Vagina (tissue), 2 donors: ENCODE measurements at regions of chr4 and their contacts with region 1.

Region 1: DNA sequence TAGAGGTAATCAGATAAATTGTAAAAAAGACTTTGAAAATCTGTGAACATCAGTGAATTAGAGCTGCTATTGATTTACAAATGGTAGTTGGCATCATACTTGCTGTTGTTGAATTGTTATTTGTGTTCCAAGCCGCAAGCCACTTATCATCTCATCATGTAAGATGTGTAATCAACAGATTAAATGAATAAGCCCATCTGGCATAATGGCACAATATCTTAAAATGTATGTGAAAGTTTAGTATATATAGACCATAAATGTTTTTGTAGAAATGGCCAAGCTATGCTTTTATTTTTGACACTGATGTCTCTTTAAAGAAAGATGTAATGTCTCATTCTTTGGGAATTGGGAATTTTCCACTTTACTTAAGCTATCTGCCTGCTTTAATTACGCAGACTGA is 682.6 kb upstream of the GNPDA2 start:
- DNase-seq: no peak
- H3K4me3 ChIP-seq: no peak overlapping the region
- H3K27ac ChIP-seq: no peak overlapping the region
- H3K4me1 ChIP-seq: no peaks in the 10 kb centered on the region
- H3K27me3 ChIP-seq: no peaks in the 10 kb centered on the region
- CTCF ChIP-seq: no peak
- POLR2A ChIP-seq: no peak

Region 2: DNA sequence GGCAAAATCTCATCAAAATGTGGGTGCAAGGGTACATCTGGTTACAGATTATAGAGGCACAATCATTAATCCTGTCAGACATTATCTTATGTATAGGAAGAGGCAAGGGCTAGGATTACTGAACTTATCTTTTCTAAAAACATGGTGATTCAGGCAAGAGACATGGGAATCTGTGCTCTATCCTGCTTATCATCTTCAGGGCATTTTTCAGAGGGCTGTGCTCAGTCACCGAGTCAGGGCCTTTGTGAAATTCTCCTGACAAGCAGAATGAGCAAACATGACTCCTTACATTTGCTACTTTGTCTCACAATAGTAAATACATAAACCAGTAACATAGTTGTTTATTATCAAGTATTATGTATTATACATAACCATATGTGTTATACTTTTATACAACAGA is 876.1 kb before region 1 on chr4:
- intact Hi-C with region 1: loop called (anchors 5 kb)
- DNase-seq: no peak
- H3K4me3 ChIP-seq: no peak overlapping the region
- H3K27ac ChIP-seq: no peak overlapping the region
- H3K4me1 ChIP-seq: no peaks in the 10 kb centered on the region
- H3K27me3 ChIP-seq: no peaks in the 10 kb centered on the region
- CTCF ChIP-seq: no peak
- POLR2A ChIP-seq: no peak

Region 3: GRCh38 chr4:45475548-45475947 is 66.6 kb after region 1 on chr4:
- intact Hi-C with region 1: no loop called
- DNase-seq: no peak
- H3K4me3 ChIP-seq: no peak overlapping the region
- H3K27ac ChIP-seq: no peak overlapping the region
- H3K4me1 ChIP-seq: no peaks in the 10 kb centered on the region
- H3K27me3 ChIP-seq: no peaks in the 10 kb centered on the region
- CTCF ChIP-seq: no peak
- POLR2A ChIP-seq: no peak

Region 4: DNA sequence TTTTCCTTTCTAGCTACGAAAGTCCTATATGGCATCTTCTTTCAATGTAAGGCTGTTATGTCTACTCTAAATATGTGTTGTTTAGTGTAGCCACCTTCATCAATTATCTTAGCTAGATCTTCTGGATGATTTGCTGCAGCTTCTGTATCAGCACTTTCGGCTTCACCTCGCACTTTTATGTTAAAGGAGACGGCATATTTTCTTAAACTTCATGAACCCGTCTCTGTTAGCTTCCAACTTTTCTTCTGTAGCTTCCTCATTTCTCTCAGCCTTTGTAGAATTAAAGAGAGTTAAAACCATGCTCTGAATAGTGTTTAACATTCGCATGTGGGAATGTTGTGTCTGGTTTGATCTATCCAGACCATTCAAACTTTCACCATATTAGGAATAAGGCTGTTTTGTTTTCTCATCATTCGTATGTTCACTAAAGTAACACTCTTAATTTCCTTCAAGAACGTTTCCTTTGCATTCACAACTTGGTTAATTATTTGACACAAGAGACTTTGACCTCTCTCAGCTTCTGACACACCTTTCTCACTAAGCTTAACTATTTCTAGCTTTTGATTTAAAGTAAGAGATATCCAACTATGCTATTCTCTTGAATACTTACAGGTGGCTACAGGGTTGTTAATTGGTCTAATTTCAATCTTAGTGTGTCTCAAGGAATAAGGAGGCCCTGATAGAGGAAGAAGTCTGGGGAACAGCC is 238.0 kb after region 1 on chr4:
- intact Hi-C with region 1: no loop called
- DNase-seq: no peak
- H3K4me3 ChIP-seq: no peak overlapping the region
- H3K27ac ChIP-seq: no peak overlapping the region
- H3K4me1 ChIP-seq: no peaks in the 10 kb centered on the region
- H3K27me3 ChIP-seq: no peaks in the 10 kb centered on the region
- CTCF ChIP-seq: no peak
- POLR2A ChIP-seq: no peak

Region 5: GRCh38 chr4:47383829-47384427 is 1974.9 kb after region 1 on chr4:
- intact Hi-C with region 1: no loop called
- DNase-seq: no peak
- H3K4me3 ChIP-seq: no peak overlapping the region
- H3K27ac ChIP-seq: no peak overlapping the region
- H3K4me1 ChIP-seq: no peaks in the 10 kb centered on the region
- H3K27me3 ChIP-seq: no peaks in the 10 kb centered on the region
- CTCF ChIP-seq: peak in 1 of 3 experiments; percentile 39
- POLR2A ChIP-seq: no peak